Right cardiac atrium (tissue), 5 donors: ENCODE measurements at regions of chr16 and their contacts with region 1.

Region 1: DNA sequence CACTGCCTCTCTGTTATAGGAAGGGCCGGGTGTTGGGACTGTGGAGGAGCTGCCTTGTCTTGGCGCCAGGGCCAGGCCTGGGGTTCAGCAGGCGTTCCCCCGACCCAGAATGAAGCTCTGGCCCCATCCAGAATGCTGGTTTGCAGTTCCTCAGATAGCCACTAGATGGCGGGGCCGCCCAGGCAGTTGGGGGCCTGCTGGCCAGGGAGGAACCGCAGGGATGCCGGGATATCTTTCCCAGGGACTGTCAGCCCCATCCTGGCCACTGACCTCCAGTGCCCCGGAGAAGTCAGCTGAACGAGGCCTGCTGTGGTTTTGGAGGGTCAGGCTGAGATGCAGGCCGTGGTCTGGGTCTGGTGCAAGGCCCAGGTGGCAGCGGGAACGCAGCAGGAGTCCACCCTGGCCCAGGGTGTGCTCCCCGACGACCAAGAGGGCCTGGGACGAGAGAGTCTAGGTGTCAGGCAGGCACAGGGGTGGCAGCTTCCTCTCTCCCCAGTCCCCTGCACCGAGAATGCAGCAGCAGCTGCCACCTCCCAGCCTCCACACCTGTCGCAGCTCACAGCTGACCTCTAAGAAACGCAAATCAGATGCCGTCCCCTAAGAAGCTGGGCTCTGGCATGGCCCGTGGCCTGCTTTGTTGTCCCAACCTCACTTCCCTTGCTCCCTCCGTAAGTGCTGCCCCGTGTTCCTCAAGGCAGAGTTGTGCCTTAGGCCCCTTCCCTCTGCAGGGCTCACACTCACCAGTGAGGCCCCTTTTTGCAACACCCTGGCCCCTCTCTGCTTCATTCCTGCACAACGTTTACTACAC is 51.2 kb downstream of the RMI2 start:
- DNase-seq: peak; percentile 71 to 89 (median 89)
- ATAC-seq: peak; percentile 77 to 81
- H3K4me3 ChIP-seq: no peak overlapping the region
- H3K27ac ChIP-seq: no peak overlapping the region
- H3K4me1 ChIP-seq: no peaks in the 10 kb centered on the region
- H3K27me3 ChIP-seq: no peaks in the 10 kb centered on the region

Region 2: GRCh38 chr16:11651796-11652195 is 255.4 kb after region 1 on chr16:
- intact Hi-C with region 1: loop called in 1 of 4 experiments (anchors 5 kb)
- DNase-seq: no peak
- ATAC-seq: no peak
- H3K4me3 ChIP-seq: no peak overlapping the region
- H3K27ac ChIP-seq: no peak overlapping the region
- H3K4me1 ChIP-seq: no peaks in the 10 kb centered on the region
- H3K27me3 ChIP-seq: no peaks in the 10 kb centered on the region